GM12878 (cell line): ENCODE measurements at regions of chr22 and their contacts with region 1.

Region 1: GRCh38 chr22:50620593-50621355 is 7.2 kb downstream of the ARSA start:
- DNase-seq: peak; percentile 86
- ATAC-seq: peak; percentile 86
- H3K4me3 ChIP-seq: peak overlapping the region; percentile 70
- H3K27ac ChIP-seq: peak overlapping the region; percentile 97
- H3K4me1 ChIP-seq: peaks cover 28% of the 10 kb centered on the region
- H3K27me3 ChIP-seq: no peaks in the 10 kb centered on the region
- CTCF ChIP-seq: peak in 1 of 3 experiments; percentile 74; a peak in 2 of 6 replicates
- EP300 ChIP-seq: no peak
- POLR2A ChIP-seq: peak; percentile 71
- RAD21 ChIP-seq: no peak

Region 2: GRCh38 chr22:50341977-50342650 is 278.7 kb before region 1 on chr22:
- CTCF ChIA-PET with region 1: interaction called, 11 read pairs
- POLR2A ChIA-PET with region 1: no interaction called
- RAD21 ChIA-PET with region 1: interaction called, 9 read pairs
- SMC1A ChIA-PET with region 1: no interaction called
- in situ Hi-C with region 1: no loop called
- intact Hi-C with region 1: no loop called
- DNase-seq: no peak
- ATAC-seq: peak; percentile 88
- H3K4me3 ChIP-seq: peak overlapping the region; percentile 80
- H3K27ac ChIP-seq: peak overlapping the region; percentile 51; the same call in 1 of the 2 replicates
- H3K4me1 ChIP-seq: 0 out of 2 replicates have a peak, but pooled peaks cover 3% of the 10 kb centered on the region
- H3K27me3 ChIP-seq: no peaks in the 10 kb centered on the region
- CTCF ChIP-seq: peak; percentile 96 to 99 (median 96); a peak in 5 of 6 replicates
- EP300 ChIP-seq: no peak
- POLR2A ChIP-seq: no peak
- RAD21 ChIP-seq: peak; percentile 93

Region 3: DNA sequence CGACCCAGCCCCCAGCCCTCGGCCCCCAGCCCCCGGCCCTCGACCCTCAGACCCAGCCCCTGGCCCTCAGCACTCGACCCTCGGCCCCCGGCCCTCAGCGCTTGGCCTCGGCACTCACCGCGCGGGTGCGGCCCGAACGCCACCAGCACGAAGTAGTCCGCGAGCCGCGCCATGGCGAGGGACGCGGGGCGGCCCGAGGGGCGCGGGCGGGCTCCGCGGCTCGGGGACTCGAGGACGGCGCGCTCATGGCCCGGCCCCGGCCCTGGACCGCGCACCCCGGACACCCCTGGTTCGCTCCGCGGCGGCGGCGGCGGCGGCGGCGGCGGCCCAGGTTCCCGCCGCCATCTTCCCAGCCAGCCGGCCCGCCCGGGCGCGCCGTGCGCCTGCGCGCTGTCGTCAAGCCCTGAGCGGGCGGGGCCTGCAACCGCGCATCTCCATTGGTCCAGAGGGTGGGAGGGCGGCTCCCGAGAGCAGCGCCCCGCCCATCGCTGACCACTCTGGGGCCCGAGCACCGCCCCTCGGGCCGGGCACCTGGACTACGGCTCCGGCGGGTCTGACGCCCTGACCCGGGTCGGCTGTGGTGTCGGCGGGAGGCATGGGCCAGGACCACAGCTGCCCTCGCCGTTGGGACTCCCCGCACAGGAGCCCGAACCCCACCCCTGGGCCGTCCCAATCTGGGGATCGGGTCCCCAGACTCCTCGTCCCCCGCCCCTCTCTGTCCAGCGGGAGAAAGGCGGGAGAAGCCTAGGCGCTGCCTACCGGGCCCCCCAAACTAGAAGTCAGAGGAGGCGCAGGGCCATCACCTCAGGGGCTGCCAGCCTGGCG is 145.9 kb before region 1 on chr22 and contains the start of gene SBF1:
- CTCF ChIA-PET with region 1: interaction called, 19 read pairs
- POLR2A ChIA-PET with region 1: interaction called, 3 read pairs
- RAD21 ChIA-PET with region 1: interaction called, 11 read pairs
- SMC1A ChIA-PET with region 1: no interaction called
- in situ Hi-C with region 1: no loop called
- intact Hi-C with region 1: no loop called
- DNase-seq: peak; percentile 43
- ATAC-seq: peak; percentile 81
- H3K4me3 ChIP-seq: peak within 1 kb of the TSS; percentile 96
- H3K27ac ChIP-seq: peak within 1 kb of the TSS; percentile 48; the same call in 1 of the 2 replicates
- H3K4me1 ChIP-seq: peaks cover 44% of the 10 kb centered on the region
- H3K27me3 ChIP-seq: no peaks in the 10 kb centered on the region
- CTCF ChIP-seq: no peak
- EP300 ChIP-seq: no peak
- POLR2A ChIP-seq: peak; percentile 63
- RAD21 ChIP-seq: no peak
- polyA plus RNA-seq, gene SBF1: 0.23 to 1.2 TPM

Region 4: GRCh38 chr22:50525390-50526068 is 95.2 kb before region 1 on chr22 and contains the start of gene SCO2:
- CTCF ChIA-PET with region 1: interaction called, 32 read pairs
- POLR2A ChIA-PET with region 1: interaction called, 11 read pairs
- RAD21 ChIA-PET with region 1: interaction called, 43 read pairs
- SMC1A ChIA-PET with region 1: interaction called, 20 read pairs
- in situ Hi-C with region 1: loop called (anchors 5 kb)
- intact Hi-C with region 1: loop called (anchors 1 kb)
- DNase-seq: peak; percentile 89
- ATAC-seq: peak; percentile 54
- H3K4me3 ChIP-seq: peak within 1 kb of the TSS; percentile 74
- H3K27ac ChIP-seq: peak within 1 kb of the TSS; percentile 94
- H3K4me1 ChIP-seq: peaks cover 16% of the 10 kb centered on the region
- H3K27me3 ChIP-seq: no peaks in the 10 kb centered on the region
- CTCF ChIP-seq: peak; percentile 32 to 45 (median 42); a peak in 5 of 6 replicates
- EP300 ChIP-seq: no peak; a peak in 1 of 4 replicates
- POLR2A ChIP-seq: no peak
- RAD21 ChIP-seq: peak; percentile 45; the same call in 1 of the 2 replicates
- polyA plus RNA-seq, gene SCO2: 1.0 TPM in 1 of 2 experiments, not detected in the other

Region 5: DNA sequence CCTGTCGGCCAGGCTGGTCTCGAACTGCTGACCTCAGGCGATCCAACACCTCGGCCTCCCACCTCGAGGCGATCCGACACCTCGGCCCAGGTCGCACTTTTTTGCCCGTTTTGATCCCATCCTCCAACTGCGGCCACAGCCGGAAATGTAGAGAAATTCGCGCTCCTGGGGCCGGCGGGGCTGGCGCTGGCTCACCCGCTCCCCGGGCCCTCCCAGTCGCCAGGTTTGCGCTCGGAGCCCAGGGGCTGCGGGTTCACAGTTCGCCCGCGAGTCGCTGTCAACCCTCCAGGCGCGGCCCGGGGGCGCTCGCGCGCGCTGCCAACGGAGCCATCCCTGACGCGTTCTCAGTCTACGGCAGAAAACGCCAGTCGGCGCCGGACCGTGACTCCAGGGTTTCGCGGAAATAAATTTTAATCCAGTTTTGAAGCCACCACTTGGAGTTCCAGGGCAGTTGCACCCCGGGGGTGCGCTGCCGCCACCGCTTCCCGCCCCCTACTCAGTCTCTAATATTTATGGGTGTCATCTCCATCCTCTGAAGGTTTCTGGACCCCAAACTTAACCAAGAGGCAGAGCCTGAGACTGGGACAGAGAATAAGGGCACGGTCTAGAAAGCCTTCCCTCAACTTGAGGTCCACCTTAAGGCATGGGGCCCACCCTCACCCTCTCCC is 76.6 kb before region 1 on chr22:
- CTCF ChIA-PET with region 1: interaction called, 24 read pairs
- POLR2A ChIA-PET with region 1: interaction called, 10 read pairs
- RAD21 ChIA-PET with region 1: interaction called, 25 read pairs
- SMC1A ChIA-PET with region 1: interaction called, 14 read pairs
- in situ Hi-C with region 1: no loop called
- intact Hi-C with region 1: loop called (anchors 5 kb)
- DNase-seq: no peak
- ATAC-seq: peak; percentile 43
- H3K4me3 ChIP-seq: no peak overlapping the region
- H3K27ac ChIP-seq: peak overlapping the region; percentile 45; the same call in 1 of the 2 replicates
- H3K4me1 ChIP-seq: peaks cover 46% of the 10 kb centered on the region
- H3K27me3 ChIP-seq: peaks cover 0 to 1% of the 10 kb centered on the region in 2 experiments; a peak in 1 of 4 replicates
- CTCF ChIP-seq: peak; percentile 62 to 76 (median 72)
- EP300 ChIP-seq: no peak
- POLR2A ChIP-seq: peak; percentile 38
- RAD21 ChIP-seq: peak; percentile 38; the same call in 1 of the 2 replicates

Region 6: DNA sequence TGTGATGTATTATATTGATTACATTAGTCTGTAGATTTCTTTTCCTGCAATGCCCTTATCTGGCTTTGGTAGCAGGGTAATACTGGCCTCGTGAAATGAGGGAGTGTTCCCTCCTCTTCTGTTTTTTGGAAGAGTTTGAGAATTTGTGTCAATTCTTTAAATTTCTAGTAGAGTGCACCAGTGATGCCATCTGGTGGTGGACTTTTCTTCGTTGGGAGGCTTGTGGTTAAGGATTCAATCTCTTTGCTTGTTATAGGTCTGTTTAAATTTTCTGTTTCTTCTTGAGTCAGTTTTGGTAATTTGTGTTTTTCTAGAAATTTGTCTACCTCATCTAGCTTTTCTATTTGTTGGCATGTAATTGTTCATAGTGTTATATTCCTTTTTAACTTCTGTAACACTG is 70.7 kb after region 1 on chr22:
- CTCF ChIA-PET with region 1: interaction called, 15 read pairs
- POLR2A ChIA-PET with region 1: no interaction called
- RAD21 ChIA-PET with region 1: interaction called, 4 read pairs
- SMC1A ChIA-PET with region 1: interaction called, 4 read pairs
- in situ Hi-C with region 1: no loop called
- intact Hi-C with region 1: loop called (anchors 5 kb)
- DNase-seq: peak; percentile 13
- ATAC-seq: peak; percentile 47
- H3K4me3 ChIP-seq: no peak overlapping the region
- H3K27ac ChIP-seq: no peak overlapping the region
- H3K4me1 ChIP-seq: no peaks in the 10 kb centered on the region
- H3K27me3 ChIP-seq: no peaks in the 10 kb centered on the region; a peak in 2 of 4 replicates
- CTCF ChIP-seq: peak; percentile 35 to 55 (median 55); a peak in 5 of 6 replicates
- EP300 ChIP-seq: no peak
- POLR2A ChIP-seq: no peak
- RAD21 ChIP-seq: peak; percentile 74

Region 7: DNA sequence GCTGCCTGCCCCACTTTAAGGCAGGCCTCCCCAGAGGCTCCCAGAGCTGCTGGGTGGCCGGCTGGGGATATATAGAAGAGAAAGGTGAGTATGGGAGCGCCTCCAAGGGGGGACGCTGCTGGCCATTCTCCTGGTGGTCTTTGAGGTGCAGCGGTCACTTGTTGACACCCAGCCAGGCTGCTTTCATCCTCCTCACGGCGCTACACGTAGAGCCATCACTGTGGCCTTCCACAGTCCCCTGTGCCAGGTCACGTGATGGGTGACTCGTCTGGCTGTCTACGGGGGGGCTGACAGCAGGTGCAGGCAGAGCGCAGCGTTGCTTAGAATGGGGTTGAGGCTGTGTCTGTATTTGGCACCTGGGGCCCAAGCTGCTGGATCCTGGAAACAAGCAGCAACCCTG is 119.1 kb after region 1 on chr22:
- CTCF ChIA-PET with region 1: no interaction called
- POLR2A ChIA-PET with region 1: no interaction called
- RAD21 ChIA-PET with region 1: no interaction called
- SMC1A ChIA-PET with region 1: no interaction called
- in situ Hi-C with region 1: no loop called
- intact Hi-C with region 1: no loop called
- DNase-seq: no peak
- ATAC-seq: no peak
- H3K4me3 ChIP-seq: no peak overlapping the region
- H3K27ac ChIP-seq: no peak overlapping the region
- H3K4me1 ChIP-seq: no peaks in the 10 kb centered on the region
- H3K27me3 ChIP-seq: no peaks in the 10 kb centered on the region; a peak in 3 of 4 replicates
- CTCF ChIP-seq: no peak
- EP300 ChIP-seq: no peak
- POLR2A ChIP-seq: no peak
- RAD21 ChIP-seq: no peak